ENCODE measurements at regions of chr3 and their contacts with region 1.

Region 1: GRCh38 chr3:185585859-185586685 is at the start of gene SENP2:
- DNase-seq: peak; percentile 96 to 100 (median 100)
- ATAC-seq: peak; percentile 92 to 93
- H3K4me3 Mint-ChIP-seq: peak within 1 kb of the TSS; percentile 76 to 94 (median 90)
- H3K27ac Mint-ChIP-seq: peak within 1 kb of the TSS; percentile 87 to 99 (median 96)
- H3K4me1 Mint-ChIP-seq: peaks cover 14 to 42% (median 36%) of the 10 kb centered on the region in 4 donors
- H3K27me3 Mint-ChIP-seq: peaks cover 0 to 3% (median 0%) of the 10 kb centered on the region in 5 donors
- polyA plus RNA-seq, gene SENP2: 12.3 to 13.8 (median 13.8) TPM

Region 2: GRCh38 chr3:185498503-185499396 is 87.3 kb before region 1 on chr3 and contains the start of gene TMEM41A:
- POLR2A ChIA-PET with region 1: interaction called, 11 read pairs
- DNase-seq: peak; percentile 80 to 92 (median 88)
- ATAC-seq: peak; percentile 96 to 97
- H3K4me3 Mint-ChIP-seq: peak within 1 kb of the TSS; percentile 93 to 98 (median 94)
- H3K27ac Mint-ChIP-seq: peak within 1 kb of the TSS; percentile 86 to 96 (median 94)
- H3K4me1 Mint-ChIP-seq: peaks cover 7 to 31% (median 29%) of the 10 kb centered on the region in 4 donors
- H3K27me3 Mint-ChIP-seq: no peaks in the 10 kb centered on the region
- polyA plus RNA-seq, gene TMEM41A: 16.7 to 22.0 (median 19.3) TPM

Region 3: DNA sequence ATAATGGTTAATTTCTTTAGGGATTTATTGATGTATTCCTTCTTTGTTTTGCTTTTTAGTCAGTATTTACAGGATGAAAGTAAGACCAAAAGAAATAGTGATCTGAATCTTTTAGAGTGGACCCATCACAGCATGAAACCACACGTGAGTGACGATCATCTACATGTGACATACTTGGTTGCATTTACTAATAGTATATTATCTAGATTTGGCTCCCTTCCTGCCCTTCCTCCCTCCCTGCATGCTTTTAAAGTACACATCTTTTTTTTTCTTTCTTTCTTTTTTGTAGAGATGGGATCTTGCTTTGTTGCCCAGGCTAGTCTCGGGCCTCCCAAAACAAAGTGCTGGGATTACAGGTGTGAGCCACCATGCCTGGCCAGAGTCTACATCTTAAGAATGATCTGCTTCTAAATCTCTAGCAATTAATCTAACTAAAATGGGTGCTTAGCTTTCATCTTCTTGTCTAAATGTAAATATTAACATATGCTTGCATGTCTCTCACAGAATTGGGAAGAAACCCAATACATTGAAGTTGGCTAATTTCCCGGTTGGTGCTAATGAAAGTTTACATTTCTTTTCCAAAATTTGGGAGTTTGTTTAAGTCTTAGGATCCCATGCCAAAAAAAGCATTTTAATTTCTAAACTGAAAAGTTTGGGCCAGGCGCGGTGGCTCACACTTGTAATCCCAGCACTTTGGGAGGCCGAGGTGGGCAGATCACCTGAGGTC is 38.0 kb after region 1 on chr3:
- POLR2A ChIA-PET with region 1: no interaction called
- DNase-seq: no peak
- ATAC-seq: no peak
- H3K4me3 Mint-ChIP-seq: no peak overlapping the region
- H3K27ac Mint-ChIP-seq: peak overlapping the region in 3 of 10 donors; percentile 1 to 84 (median 11)
- H3K4me1 Mint-ChIP-seq: no peaks in the 10 kb centered on the region
- H3K27me3 Mint-ChIP-seq: no peaks in the 10 kb centered on the region